Prostate gland (tissue), 2 donors: ENCODE measurements at regions of chr10 and their contacts with region 1.

Region 1: DNA sequence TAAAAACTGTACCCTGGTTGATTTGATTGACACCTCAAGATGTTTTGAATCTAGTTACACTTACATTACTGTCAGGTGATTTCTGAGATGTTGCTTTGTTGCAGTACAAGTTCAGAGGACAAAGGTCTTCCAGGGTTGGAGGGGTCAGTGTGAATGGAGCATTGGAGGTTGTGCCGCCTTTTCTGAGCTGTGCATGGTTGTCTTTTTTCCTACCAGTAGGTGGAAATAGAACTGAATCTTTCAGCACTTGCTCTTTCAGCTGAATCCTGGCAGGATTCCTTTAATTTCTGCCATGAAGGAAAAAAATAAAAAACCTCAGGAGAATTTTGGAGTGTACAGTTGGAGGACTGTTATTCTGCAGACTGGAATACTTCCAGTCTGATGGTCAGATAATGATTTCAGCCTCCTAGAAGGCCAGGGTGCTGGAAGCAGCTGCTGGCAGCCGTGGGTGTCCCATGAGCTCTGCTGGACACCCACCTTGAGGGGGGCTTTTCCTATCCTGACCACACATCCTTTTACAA is 82.7 kb downstream of the PLCE1 start:
- DNase-seq: no peak
- H3K4me3 ChIP-seq: no peak overlapping the region
- H3K27ac ChIP-seq: no peak overlapping the region
- H3K4me1 ChIP-seq: peaks cover 9% of the 10 kb centered on the region
- H3K27me3 ChIP-seq: no peaks in the 10 kb centered on the region
- CTCF ChIP-seq: peak in 2 of 4 experiments; percentile 24 to 49
- POLR2A ChIP-seq: no peak

Region 2: DNA sequence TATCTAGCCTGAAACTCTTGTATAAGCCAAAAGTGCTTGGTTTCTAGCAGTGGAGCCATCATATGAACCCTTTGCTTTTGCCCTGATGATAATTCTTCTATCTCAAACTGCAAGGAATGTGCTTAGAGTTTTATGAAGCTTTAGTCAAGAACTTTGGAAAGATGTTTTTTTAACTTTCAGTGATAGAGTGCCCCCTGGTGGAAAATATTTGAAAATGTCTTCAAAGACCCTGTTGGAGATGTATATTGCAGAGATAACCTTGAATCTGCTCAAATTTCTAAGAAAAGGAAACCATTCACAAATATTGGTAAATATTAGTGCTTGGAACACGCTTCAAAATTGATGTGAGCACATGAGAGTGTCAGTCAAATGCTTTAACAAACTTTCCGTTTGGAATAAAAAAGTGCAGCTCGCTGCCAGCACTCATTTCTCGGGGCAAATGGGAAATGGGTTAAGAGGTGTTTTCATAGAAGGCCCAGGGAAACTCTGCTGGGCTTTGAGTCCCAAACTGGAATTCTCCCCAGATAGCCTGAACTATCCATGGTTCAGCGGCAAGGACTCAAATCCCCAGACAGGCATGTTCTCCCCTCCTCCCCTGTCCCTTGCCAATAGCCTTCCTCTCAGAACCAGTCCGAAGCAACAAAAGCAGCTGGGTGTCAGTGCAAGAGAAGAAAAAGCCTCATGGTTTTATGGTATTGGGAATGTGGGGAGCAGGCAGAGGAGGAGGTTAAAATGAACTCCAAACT is 723.6 kb before region 1 on chr10:
- intact Hi-C with region 1: no loop called
- DNase-seq: no peak
- H3K4me3 ChIP-seq: no peak overlapping the region
- H3K27ac ChIP-seq: no peak overlapping the region
- H3K4me1 ChIP-seq: no peaks in the 10 kb centered on the region
- H3K27me3 ChIP-seq: no peaks in the 10 kb centered on the region
- CTCF ChIP-seq: peak; percentile 28 to 68 (median 61)
- POLR2A ChIP-seq: no peak

Region 3: GRCh38 chr10:94155722-94156271 is 79.4 kb after region 1 on chr10:
- intact Hi-C with region 1: no loop called
- DNase-seq: no peak
- H3K4me3 ChIP-seq: no peak overlapping the region
- H3K27ac ChIP-seq: no peak overlapping the region
- H3K4me1 ChIP-seq: no peaks in the 10 kb centered on the region
- H3K27me3 ChIP-seq: no peaks in the 10 kb centered on the region
- CTCF ChIP-seq: no peak
- POLR2A ChIP-seq: no peak

Region 4: GRCh38 chr10:94172332-94172731 is 96.0 kb after region 1 on chr10:
- intact Hi-C with region 1: no loop called
- DNase-seq: no peak
- H3K4me3 ChIP-seq: no peak overlapping the region
- H3K27ac ChIP-seq: no peak overlapping the region
- H3K4me1 ChIP-seq: no peaks in the 10 kb centered on the region
- H3K27me3 ChIP-seq: no peaks in the 10 kb centered on the region
- CTCF ChIP-seq: no peak
- POLR2A ChIP-seq: no peak

Region 5: DNA sequence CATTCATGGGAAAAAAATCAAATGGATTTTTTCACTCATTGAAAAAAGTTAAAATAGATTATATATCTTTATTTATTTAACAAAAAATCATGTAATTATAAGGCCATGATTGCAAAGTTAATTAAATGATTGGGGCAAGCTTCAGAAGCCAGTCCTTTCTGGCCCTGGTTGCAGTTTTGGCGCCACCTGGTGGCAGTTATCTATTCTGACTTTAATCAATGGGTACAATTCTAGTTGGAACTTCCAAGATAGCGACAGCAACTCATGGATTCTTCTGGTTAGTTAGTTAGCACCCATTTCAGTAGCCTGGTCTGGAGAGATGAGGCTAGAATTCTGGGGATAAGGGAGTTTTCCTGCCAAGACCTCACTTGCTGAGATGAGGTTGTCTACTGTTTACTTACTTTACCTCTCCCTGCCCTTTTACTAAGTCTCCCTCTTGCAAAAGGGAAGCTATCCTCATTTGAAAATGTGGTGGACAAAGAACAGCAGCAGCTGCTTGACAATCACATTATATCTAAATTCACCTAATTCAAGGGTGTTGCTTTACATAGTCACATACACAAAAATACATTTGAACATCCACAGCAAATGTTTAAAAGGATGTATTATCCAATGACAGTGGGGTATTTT is 244.0 kb after region 1 on chr10:
- intact Hi-C with region 1: loop called (anchors 2 kb)
- DNase-seq: peak; percentile 70
- H3K4me3 ChIP-seq: no peak overlapping the region
- H3K27ac ChIP-seq: no peak overlapping the region
- H3K4me1 ChIP-seq: no peaks in the 10 kb centered on the region
- H3K27me3 ChIP-seq: no peaks in the 10 kb centered on the region
- CTCF ChIP-seq: peak; percentile 71 to 96 (median 79)
- POLR2A ChIP-seq: no peak